ENCODE measurements at regions of chr4 and their contacts with region 1.

Region 1: GRCh38 chr4:184937745-184938144 is 80.5 kb upstream of the HELT start:
- DNase-seq: no peak
- H3K4me3 ChIP-seq: no peak overlapping the region
- H3K27ac ChIP-seq: no peak overlapping the region
- H3K4me1 ChIP-seq: peaks cover 31% of the 10 kb centered on the region
- H3K27me3 ChIP-seq: no peaks in the 10 kb centered on the region
- CTCF ChIP-seq: no peak

Region 2: GRCh38 chr4:184845367-184846021 is 92.3 kb before region 1 on chr4:
- CTCF ChIA-PET with region 1: no interaction called
- POLR2A ChIA-PET with region 1: no interaction called
- intact Hi-C with region 1: loop called (anchors 5 kb)
- DNase-seq: peak; percentile 16 to 94
- H3K4me3 ChIP-seq: no peak overlapping the region
- H3K27ac ChIP-seq: peak overlapping the region; percentile 79
- H3K4me1 ChIP-seq: peaks cover 18% of the 10 kb centered on the region
- H3K27me3 ChIP-seq: no peaks in the 10 kb centered on the region
- CTCF ChIP-seq: no peak

Region 3: GRCh38 chr4:184983672-184984356 is 46.1 kb after region 1 on chr4:
- CTCF ChIA-PET with region 1: no interaction called
- POLR2A ChIA-PET with region 1: interaction called, 14 read pairs
- intact Hi-C with region 1: no loop called
- DNase-seq: peak in 1 of 2 experiments; percentile 57
- H3K4me3 ChIP-seq: no peak overlapping the region
- H3K27ac ChIP-seq: no peak overlapping the region
- H3K4me1 ChIP-seq: no peaks in the 10 kb centered on the region
- H3K27me3 ChIP-seq: no peaks in the 10 kb centered on the region
- CTCF ChIP-seq: no peak; the same call in 1 of the 2 replicates

Measured in PC-9 (cell line).